H1 (cell line): ENCODE measurements at regions of chr15 and their contacts with region 1.

Region 1: GRCh38 chr15:90677807-90678790 is 39.0 kb upstream of the BLM start:
- DNase-seq: no peak
- H3K4me3 ChIP-seq: no peak overlapping the region
- H3K27ac ChIP-seq: no peak overlapping the region
- H3K4me1 ChIP-seq: no peaks in the 10 kb centered on the region
- H3K27me3 ChIP-seq: no peaks in the 10 kb centered on the region
- CTCF ChIP-seq: no peak
- EP300 ChIP-seq: no peak
- POLR2A ChIP-seq: no peak
- RAD21 ChIP-seq: no peak

Region 2: GRCh38 chr15:90519688-90520087 is 158.4 kb before region 1 on chr15:
- CTCF ChIA-PET with region 1: no interaction called
- POLR2A ChIA-PET with region 1: no interaction called
- DNase-seq: no peak
- H3K4me3 ChIP-seq: no peak overlapping the region
- H3K27ac ChIP-seq: no peak overlapping the region
- H3K4me1 ChIP-seq: no peaks in the 10 kb centered on the region
- H3K27me3 ChIP-seq: no peaks in the 10 kb centered on the region
- CTCF ChIP-seq: no peak
- EP300 ChIP-seq: no peak
- POLR2A ChIP-seq: no peak
- RAD21 ChIP-seq: no peak

Region 3: GRCh38 chr15:90690585-90690984 is 12.5 kb after region 1 on chr15:
- CTCF ChIA-PET with region 1: interaction called, 11 read pairs
- POLR2A ChIA-PET with region 1: no interaction called
- DNase-seq: no peak
- H3K4me3 ChIP-seq: no peak overlapping the region
- H3K27ac ChIP-seq: no peak overlapping the region
- H3K4me1 ChIP-seq: no peaks in the 10 kb centered on the region
- H3K27me3 ChIP-seq: no peaks in the 10 kb centered on the region
- CTCF ChIP-seq: no peak
- EP300 ChIP-seq: no peak
- POLR2A ChIP-seq: no peak
- RAD21 ChIP-seq: no peak

Region 4: DNA sequence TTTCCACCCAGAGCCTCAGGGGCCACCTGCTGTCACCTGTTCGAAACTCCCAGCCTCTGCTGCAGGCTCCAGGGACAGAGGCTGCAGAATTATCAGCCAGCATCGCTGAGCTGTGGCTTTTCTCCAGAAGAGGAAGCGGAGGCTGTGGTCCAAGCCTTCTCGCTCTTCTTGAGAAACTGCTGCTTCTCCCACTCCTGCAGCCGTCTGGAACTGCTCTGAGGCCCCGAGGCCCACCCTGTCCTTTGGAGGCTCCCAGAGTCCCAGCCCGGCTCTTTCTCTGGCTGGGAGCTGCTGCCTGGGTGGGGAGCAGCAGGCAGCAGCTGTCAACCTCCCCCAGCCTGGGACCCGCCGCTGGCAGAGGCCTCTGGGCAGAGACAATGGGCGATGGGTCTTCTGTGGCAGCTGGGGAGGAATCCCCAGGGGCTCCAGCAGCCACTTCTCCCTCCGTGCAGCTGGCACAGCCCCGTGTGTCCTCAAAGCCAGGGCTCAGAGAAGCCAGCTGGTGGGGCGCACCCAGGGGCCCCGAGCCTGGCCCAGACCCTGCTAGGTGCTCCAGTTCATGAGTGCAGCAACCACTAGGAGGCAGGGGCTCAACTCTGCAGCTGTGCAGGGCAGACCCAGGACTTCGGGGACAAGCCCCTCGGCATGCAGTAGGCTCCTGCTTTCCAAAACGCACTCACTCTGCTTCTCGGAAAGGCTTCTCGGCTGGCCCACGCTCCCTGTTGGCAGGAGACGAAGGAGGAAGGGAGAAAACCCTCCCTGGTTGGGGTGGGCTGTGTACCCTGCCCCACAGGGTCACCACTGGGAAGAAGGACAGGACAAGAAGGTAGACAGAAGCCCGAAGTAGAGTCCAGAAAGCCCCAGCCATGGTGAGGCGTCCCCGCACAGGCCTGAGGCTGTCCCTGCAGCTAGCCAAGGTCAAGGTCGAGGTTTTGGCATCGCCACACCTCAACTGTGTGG is 140.4 kb after region 1 on chr15:
- CTCF ChIA-PET with region 1: no interaction called
- POLR2A ChIA-PET with region 1: no interaction called
- DNase-seq: peak in 1 of 2 experiments; percentile 53
- H3K4me3 ChIP-seq: no peak overlapping the region
- H3K27ac ChIP-seq: no peak overlapping the region
- H3K4me1 ChIP-seq: peaks cover 9 to 20% (median 17%) of the 10 kb centered on the region in 4 experiments
- H3K27me3 ChIP-seq: no peaks in the 10 kb centered on the region
- CTCF ChIP-seq: peak; percentile 59 to 65 (median 63)
- EP300 ChIP-seq: no peak
- POLR2A ChIP-seq: no peak
- RAD21 ChIP-seq: peak; percentile 59 to 73